Activated T-helper 1 cell treated with anti-CD3 and anti-CD28 coated beads, Interleukin-12 subunit alpha, Interleukin-12 subunit beta, Interleukin-2, Interleukin-4 antibody, amounts not matched to agents 30 ng/mL and 10 ng/mL and 1 ng/mL, durations not matched to agents 14 hours and 24 hours and 36 hours (primary cell): ENCODE measurements at regions of chr13 and their contacts with region 1.

Region 1: DNA sequence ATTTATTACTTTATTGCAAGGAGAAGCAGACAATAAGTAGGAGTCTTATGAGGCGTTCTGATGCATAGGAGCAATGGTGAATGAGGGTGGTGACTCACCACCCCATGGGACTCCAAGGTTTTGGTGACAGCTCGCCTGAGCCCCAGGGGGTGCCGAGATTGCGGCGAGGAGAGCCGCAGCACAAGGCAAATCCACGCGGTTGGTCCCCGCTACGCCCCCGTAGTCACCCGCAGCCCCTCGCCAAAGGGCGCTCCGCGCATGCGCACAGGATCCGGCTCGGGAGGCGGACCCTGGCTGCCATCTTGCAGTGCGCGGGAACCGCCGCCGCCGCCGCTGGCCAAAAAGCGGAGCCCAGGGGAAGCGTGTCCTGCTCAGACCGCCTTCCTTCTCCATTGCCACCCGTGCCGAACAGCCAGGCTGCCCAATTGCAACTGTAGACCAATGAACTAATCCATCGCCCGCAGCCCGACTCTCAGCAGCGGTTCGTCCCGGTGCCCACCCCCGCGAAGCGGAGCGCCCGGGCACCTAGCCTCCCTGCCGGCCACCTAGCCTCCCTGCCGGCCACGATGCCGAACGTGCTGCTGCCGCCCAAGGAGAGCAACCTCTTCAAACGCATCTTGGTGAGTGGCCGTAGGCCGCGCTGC is at the start of gene NAA16:
- DNase-seq: peak; percentile 92
- H3K4me3 Mint-ChIP-seq: peak within 1 kb of the TSS; percentile 94
- H3K27ac Mint-ChIP-seq: peak within 1 kb of the TSS; percentile 83
- H3K4me1 Mint-ChIP-seq: peaks cover 38% of the 10 kb centered on the region
- H3K27me3 Mint-ChIP-seq: peaks cover 2% of the 10 kb centered on the region
- total RNA-seq, gene NAA16: 31.9 and 33.4 TPM in 2 replicates

Region 2: GRCh38 chr13:41327994-41328790 is 17.1 kb after region 1 on chr13:
- intact Hi-C with region 1: loop called (anchors 2 kb)
- DNase-seq: no peak
- H3K4me3 Mint-ChIP-seq: no peak overlapping the region
- H3K27ac Mint-ChIP-seq: no peak overlapping the region
- H3K4me1 Mint-ChIP-seq: peaks cover 13% of the 10 kb centered on the region
- H3K27me3 Mint-ChIP-seq: no peaks in the 10 kb centered on the region

Region 3: GRCh38 chr13:41352935-41353840 is 42.1 kb after region 1 on chr13:
- intact Hi-C with region 1: loop called (anchors 2 kb)
- DNase-seq: peak; percentile 47
- H3K4me3 Mint-ChIP-seq: no peak overlapping the region
- H3K27ac Mint-ChIP-seq: peak overlapping the region; percentile 24
- H3K4me1 Mint-ChIP-seq: peaks cover 38% of the 10 kb centered on the region
- H3K27me3 Mint-ChIP-seq: no peaks in the 10 kb centered on the region